ENCODE measurements at regions of chr6 and their contacts with region 1.

Region 1: DNA sequence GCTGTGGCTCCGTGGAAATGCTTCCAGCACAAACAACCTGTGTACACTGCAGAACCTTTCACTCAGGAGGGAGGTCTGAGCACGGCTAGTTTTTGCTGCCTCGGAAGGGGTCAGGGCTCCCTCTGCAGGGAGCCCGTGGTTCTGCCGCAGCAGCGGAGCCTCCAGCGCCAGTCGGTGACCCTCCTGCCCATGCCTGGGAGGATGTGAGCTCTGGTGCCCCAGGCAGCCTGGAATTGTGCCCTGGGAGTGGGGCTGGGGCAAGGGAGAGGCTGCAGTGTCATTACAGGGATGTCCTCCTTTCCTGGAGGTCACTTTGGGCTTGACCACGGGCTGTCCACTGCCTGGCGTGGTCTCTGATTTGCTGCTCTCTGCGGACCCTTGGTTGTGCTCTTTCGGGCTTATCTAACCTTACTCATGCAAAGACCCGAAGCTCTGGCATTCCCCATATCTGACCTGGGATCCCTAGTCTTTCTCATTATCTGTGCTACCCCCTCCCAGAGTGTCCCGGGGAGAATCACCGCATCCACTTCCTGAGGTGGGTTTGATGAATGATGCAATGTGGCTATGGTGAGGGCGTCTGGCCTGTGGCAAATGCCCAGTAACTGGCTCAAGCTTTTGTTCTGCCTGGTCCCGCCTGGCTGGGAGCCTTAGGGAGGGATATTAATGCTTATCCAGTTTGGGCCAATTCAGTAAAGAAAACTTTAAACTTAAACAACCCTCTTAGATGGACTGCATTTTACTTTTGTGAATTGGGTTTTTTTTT is 59.6 kb upstream of the TAGAP start:
- DNase-seq: peak; percentile 84
- H3K4me3 Mint-ChIP-seq: no peak overlapping the region
- H3K27ac Mint-ChIP-seq: peak overlapping the region; percentile 64
- H3K4me1 Mint-ChIP-seq: peaks cover 81% of the 10 kb centered on the region
- H3K27me3 Mint-ChIP-seq: peaks cover 10% of the 10 kb centered on the region

Region 2: GRCh38 chr6:158999666-159000403 is 104.5 kb before region 1 on chr6 and contains the start of gene RSPH3:
- CTCF ChIA-PET with region 1: interaction called, 317 read pairs
- DNase-seq: peak; percentile 94
- H3K4me3 Mint-ChIP-seq: peak within 1 kb of the TSS; percentile 87
- H3K27ac Mint-ChIP-seq: peak within 1 kb of the TSS; percentile 82
- H3K4me1 Mint-ChIP-seq: peaks cover 25% of the 10 kb centered on the region
- H3K27me3 Mint-ChIP-seq: peaks cover 10% of the 10 kb centered on the region

Region 3: GRCh38 chr6:159017757-159018559 is 86.4 kb before region 1 on chr6:
- CTCF ChIA-PET with region 1: interaction called, 317 read pairs
- DNase-seq: no peak
- H3K4me3 Mint-ChIP-seq: no peak overlapping the region
- H3K27ac Mint-ChIP-seq: peak overlapping the region; percentile 16
- H3K4me1 Mint-ChIP-seq: peaks cover 29% of the 10 kb centered on the region
- H3K27me3 Mint-ChIP-seq: peaks cover 5% of the 10 kb centered on the region

Region 4: GRCh38 chr6:159042003-159042825 is 62.1 kb before region 1 on chr6:
- CTCF ChIA-PET with region 1: interaction called, 234 read pairs
- DNase-seq: peak; percentile 83
- H3K4me3 Mint-ChIP-seq: peak overlapping the region; percentile 96
- H3K27ac Mint-ChIP-seq: peak overlapping the region; percentile 98
- H3K4me1 Mint-ChIP-seq: peaks cover 66% of the 10 kb centered on the region
- H3K27me3 Mint-ChIP-seq: no peaks in the 10 kb centered on the region

Region 5: DNA sequence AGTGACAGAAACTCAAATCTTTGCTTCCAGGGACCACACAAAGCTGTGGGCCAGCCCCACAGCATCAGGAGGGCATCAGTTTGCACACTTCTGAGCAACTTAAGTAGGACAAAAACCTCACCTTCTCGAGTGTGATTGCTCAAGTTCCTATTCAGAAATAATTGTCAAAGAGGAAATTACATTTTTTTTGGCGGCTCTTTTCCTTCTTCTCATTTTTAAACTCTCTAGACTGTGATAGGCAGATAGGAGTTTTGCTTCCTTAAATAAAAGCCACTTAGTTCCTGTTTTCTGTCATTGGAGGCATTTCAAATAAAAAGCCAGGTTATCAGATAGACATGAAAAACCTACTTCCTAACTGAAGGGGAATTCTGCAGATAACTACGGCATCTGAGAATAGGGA is 48.3 kb before region 1 on chr6:
- CTCF ChIA-PET with region 1: interaction called, 10 read pairs
- DNase-seq: no peak
- H3K4me3 Mint-ChIP-seq: peak overlapping the region; percentile 18
- H3K27ac Mint-ChIP-seq: peak overlapping the region; percentile 79
- H3K4me1 Mint-ChIP-seq: peaks cover 57% of the 10 kb centered on the region
- H3K27me3 Mint-ChIP-seq: peaks cover 25% of the 10 kb centered on the region

Region 6: DNA sequence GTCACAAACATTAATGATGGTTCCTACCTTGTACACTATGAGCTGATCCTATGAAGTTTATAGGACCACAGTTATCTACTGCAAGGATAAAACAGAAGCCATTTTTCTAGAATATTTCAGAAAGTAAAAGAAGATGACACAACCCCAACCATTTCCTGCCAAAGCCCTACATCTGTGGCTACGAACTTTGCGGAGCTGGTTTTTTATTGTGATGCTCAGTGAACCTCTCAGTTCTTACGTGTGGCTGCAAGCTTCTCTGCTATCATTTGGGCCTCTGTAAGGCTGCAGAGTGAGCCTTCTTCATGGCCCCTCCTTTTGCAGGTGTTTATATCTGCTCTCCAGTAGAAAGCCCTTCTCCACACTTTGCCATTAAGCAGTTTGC is 41.8 kb before region 1 on chr6:
- CTCF ChIA-PET with region 1: interaction called, 31 read pairs
- DNase-seq: peak; percentile 80
- H3K4me3 Mint-ChIP-seq: peak overlapping the region; percentile 50
- H3K27ac Mint-ChIP-seq: peak overlapping the region; percentile 100
- H3K4me1 Mint-ChIP-seq: peaks cover 72% of the 10 kb centered on the region
- H3K27me3 Mint-ChIP-seq: peaks cover 8% of the 10 kb centered on the region

Measured in activated naive CD4-positive, alpha-beta T cell treated with anti-CD3 and anti-CD28 coated beads, Interleukin-2, amount 10 ng/mL, durations not matched to agents 7 days and 5 days (primary cell).